CD8-positive, alpha-beta memory T cell (primary cell): ENCODE measurements at regions of chr19 and their contacts with region 1.

Region 1: DNA sequence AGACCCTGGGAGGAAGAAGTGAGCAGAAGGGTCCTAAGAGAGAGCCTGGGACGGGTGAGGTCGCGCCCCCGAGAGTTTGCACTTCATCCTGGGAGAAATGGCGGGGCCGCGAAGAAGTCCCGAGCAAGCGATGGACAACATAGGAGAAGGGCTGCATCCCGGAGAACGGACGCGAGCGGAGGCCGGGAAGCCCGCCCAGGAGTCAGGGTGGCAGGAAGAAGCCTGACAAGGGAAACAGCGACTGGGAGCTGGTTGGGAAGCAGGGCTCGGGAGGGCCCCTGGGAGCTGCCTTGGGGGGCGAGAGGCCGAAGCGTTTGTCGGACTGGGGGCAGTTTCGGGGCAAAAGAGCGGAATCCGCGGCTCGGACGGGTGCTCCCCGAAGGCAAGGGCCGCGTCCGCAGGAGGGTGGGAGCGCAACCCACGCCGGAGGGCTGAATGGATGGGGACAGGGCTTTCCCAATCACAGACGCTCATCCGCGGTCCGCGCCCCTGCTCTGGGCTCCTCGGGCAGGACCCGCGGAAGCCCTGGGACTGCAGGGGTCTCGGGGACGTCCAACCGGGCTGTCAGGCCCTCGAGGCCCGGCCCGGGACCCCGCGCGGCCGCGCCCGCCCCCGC is 469 bp downstream of the ABHD17A start:
- DNase-seq: no peak
- H3K4me3 ChIP-seq: peak overlapping the region; percentile 70
- H3K4me3 Mint-ChIP-seq: peak overlapping the region; percentile 94 to 100 (median 99)
- H3K27ac ChIP-seq: peak overlapping the region; percentile 96
- H3K27ac Mint-ChIP-seq: peak overlapping the region; percentile 96 to 100 (median 100)
- H3K4me1 ChIP-seq: peaks cover 34% of the 10 kb centered on the region
- H3K4me1 Mint-ChIP-seq: peaks cover 26 to 44% (median 28%) of the 10 kb centered on the region in 3 donors
- H3K27me3 ChIP-seq: no peaks in the 10 kb centered on the region
- H3K27me3 Mint-ChIP-seq: peaks cover 0 to 10% of the 10 kb centered on the region in 2 donors

Region 2: GRCh38 chr19:1848399-1849131 is 36.3 kb before region 1 on chr19 and contains the start of gene REXO1:
- CTCF ChIA-PET with region 1: no interaction called
- POLR2A ChIA-PET with region 1: no interaction called
- DNase-seq: peak; percentile 95 to 99 (median 97)
- H3K4me3 ChIP-seq: peak within 1 kb of the TSS; percentile 83
- H3K4me3 Mint-ChIP-seq: peak within 1 kb of the TSS; percentile 86 to 96 (median 88)
- H3K27ac ChIP-seq: peak within 1 kb of the TSS; percentile 94
- H3K27ac Mint-ChIP-seq: peak within 1 kb of the TSS; percentile 88 to 97 (median 93)
- H3K4me1 ChIP-seq: peaks cover 59% of the 10 kb centered on the region
- H3K4me1 Mint-ChIP-seq: peaks cover 39 to 70% (median 49%) of the 10 kb centered on the region in 3 donors
- H3K27me3 ChIP-seq: no peaks in the 10 kb centered on the region
- H3K27me3 Mint-ChIP-seq: peaks cover 0 to 3% of the 10 kb centered on the region in 2 donors
- total RNA-seq, gene REXO1: 61.0 to 63.7 TPM

Region 3: GRCh38 chr19:1904385-1905070 is 19.7 kb after region 1 on chr19:
- CTCF ChIA-PET with region 1: interaction called, 17 read pairs
- POLR2A ChIA-PET with region 1: no interaction called
- DNase-seq: no peak
- H3K4me3 ChIP-seq: no peak overlapping the region
- H3K4me3 Mint-ChIP-seq: peak overlapping the region in 3 of 7 donors; percentile 31 to 85 (median 45)
- H3K27ac ChIP-seq: peak overlapping the region; percentile 70
- H3K27ac Mint-ChIP-seq: peak overlapping the region in 7 of 8 donors; percentile 29 to 86 (median 80)
- H3K4me1 ChIP-seq: peaks cover 15% of the 10 kb centered on the region
- H3K4me1 Mint-ChIP-seq: peaks cover 15 to 32% (median 19%) of the 10 kb centered on the region in 3 donors
- H3K27me3 ChIP-seq: no peaks in the 10 kb centered on the region
- H3K27me3 Mint-ChIP-seq: no peaks in the 10 kb centered on the region